Activated CD4-positive, alpha-beta T cell treated with anti-CD3 and anti-CD28 coated beads for 36 hours (primary cell): ENCODE measurements at regions of chr6 and their contacts with region 1.

Region 1: GRCh38 chr6:117602151-117602898 is at the start of gene GOPC:
- DNase-seq: peak; percentile 96
- ATAC-seq: peak; percentile 94
- H3K4me3 Mint-ChIP-seq: peak within 1 kb of the TSS; percentile 99
- H3K27ac Mint-ChIP-seq: peak within 1 kb of the TSS; percentile 99
- H3K4me1 Mint-ChIP-seq: peaks cover 30% of the 10 kb centered on the region
- H3K27me3 Mint-ChIP-seq: peaks cover 2% of the 10 kb centered on the region
- total RNA-seq, gene GOPC: 13.3 to 15.5 TPM

Region 2: DNA sequence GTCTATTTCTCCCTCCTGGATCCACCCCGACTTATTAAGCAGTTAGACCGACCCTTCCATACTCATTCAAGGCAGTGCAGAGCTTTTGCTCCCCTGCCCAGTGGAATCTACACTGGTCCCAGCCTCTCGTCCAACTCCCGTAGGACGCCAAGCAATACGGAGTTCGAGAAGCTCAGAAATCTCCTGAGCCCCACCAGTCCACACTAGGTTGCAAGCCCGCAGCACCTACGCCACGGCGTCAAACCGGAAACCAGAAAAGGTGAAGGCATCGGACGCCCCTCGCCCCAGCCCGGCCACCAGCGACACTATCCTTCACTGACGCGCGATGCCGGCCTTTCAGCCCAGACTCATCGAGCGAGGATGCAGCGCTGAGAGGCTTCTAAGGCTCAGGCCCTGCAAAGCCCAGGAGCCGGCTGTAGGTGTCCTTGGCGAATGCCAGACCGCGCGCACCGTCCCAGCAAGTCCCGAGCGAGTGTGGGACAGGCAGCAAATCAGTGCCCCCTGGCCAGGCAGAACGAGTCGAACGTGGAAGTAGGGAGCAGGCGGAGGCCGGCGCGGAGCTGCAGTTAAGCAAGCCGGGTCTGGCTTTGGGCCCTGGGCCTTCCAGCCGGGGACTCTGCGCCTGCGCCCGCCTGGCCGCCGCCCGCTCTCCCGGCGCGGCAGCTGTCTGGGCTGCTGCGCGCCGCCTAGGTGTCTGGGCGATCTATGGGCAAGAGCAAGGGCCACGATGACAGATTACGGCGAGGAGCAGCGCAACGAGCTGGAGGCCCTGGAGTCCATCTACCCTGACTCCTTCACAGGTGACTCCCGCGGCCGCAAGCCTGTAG is 1031.3 kb before region 1 on chr6 and contains the start of gene RWDD1:
- CTCF ChIA-PET with region 1: no interaction called
- POLR2A ChIA-PET with region 1: no interaction called
- intact Hi-C with region 1: loop called in 1 of 2 experiments (anchors 1 kb)
- DNase-seq: peak; percentile 99
- ATAC-seq: peak; percentile 89
- H3K4me3 Mint-ChIP-seq: peak within 1 kb of the TSS; percentile 94
- H3K27ac Mint-ChIP-seq: peak within 1 kb of the TSS; percentile 98
- H3K4me1 Mint-ChIP-seq: peaks cover 39% of the 10 kb centered on the region
- H3K27me3 Mint-ChIP-seq: no peaks in the 10 kb centered on the region
- total RNA-seq, gene RWDD1: 40.0 to 65.4 TPM

Region 3: DNA sequence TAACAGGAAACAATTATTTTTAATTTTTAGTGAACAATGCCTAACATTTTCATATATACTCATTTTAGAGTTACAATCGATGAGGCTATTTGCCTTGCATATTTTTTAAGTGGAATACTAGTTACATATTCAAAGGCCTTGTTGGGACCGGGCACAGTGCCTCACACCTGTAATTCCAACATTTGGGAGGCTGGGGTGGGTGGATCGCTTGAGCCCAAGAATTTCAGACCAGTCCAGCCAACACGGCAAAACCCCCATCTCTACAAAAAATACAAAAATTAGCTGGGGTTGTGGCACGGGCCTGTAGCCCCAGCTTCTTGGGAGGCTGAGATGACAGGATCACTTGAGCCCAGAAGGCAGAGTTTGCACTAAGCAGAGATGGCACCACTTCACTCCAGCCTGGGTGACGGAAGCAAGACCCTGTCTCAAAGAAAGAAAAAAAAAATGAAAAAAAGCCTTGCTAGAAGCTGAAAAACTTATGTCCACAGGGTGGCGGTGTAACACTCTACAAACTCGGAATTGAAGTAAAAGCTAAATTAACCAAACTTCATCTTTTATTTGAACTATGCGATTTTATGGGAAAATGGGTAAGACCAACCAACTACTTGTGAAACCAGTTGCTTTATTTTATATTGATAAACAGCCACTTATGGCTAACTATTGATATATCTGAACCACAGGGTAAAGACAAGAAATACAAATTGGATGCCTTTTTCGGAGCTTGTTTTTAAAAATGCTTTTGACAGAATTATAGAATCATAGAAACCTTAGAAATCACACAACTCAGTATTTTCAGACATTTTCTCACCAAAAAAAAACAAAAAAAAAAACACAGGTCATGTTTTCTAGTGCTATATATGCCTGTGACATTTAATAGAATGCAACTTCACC is 152.5 kb before region 1 on chr6:
- CTCF ChIA-PET with region 1: interaction called, 58 read pairs
- POLR2A ChIA-PET with region 1: interaction called, 3 read pairs
- intact Hi-C with region 1: loop called (anchors 1 kb)
- DNase-seq: peak; percentile 72
- ATAC-seq: no peak
- H3K4me3 Mint-ChIP-seq: no peak overlapping the region
- H3K27ac Mint-ChIP-seq: no peak overlapping the region
- H3K4me1 Mint-ChIP-seq: no peaks in the 10 kb centered on the region
- H3K27me3 Mint-ChIP-seq: peaks cover 12% of the 10 kb centered on the region

Region 4: DNA sequence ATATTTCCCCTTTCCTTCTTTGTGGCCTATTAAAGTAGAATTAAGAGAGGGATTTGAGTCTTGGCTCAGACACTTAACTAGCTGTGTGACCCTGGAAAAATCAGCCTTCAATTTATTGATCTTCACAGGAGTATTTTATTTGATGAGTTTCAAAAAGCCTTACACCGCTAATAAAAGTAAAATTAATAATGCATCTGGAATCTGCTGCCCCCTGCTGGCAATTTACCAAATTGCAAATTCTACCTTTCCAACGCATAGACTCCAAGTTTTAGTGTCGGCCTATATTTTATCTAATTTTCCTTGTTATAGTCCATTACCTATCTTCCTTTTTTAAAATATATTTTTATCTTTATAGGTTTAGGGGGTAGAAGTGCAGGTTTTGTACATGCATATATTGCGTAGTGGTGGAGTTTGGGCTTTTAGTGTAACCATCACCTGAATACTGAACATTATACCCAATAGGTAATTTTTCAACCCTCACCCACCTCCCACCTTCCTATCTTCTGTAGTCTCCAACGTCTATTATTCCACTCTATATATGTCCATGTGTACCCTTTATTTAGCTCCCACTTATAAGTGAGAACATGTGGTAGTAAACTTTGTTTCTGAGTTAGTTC is 46.3 kb before region 1 on chr6:
- CTCF ChIA-PET with region 1: interaction called, 6 read pairs
- POLR2A ChIA-PET with region 1: no interaction called
- intact Hi-C with region 1: loop called in 1 of 2 experiments (anchors 2 kb)
- DNase-seq: peak; percentile 69
- ATAC-seq: no peak
- H3K4me3 Mint-ChIP-seq: no peak overlapping the region
- H3K27ac Mint-ChIP-seq: no peak overlapping the region
- H3K4me1 Mint-ChIP-seq: peaks cover under 1% of the 10 kb centered on the region
- H3K27me3 Mint-ChIP-seq: no peaks in the 10 kb centered on the region

Region 5: DNA sequence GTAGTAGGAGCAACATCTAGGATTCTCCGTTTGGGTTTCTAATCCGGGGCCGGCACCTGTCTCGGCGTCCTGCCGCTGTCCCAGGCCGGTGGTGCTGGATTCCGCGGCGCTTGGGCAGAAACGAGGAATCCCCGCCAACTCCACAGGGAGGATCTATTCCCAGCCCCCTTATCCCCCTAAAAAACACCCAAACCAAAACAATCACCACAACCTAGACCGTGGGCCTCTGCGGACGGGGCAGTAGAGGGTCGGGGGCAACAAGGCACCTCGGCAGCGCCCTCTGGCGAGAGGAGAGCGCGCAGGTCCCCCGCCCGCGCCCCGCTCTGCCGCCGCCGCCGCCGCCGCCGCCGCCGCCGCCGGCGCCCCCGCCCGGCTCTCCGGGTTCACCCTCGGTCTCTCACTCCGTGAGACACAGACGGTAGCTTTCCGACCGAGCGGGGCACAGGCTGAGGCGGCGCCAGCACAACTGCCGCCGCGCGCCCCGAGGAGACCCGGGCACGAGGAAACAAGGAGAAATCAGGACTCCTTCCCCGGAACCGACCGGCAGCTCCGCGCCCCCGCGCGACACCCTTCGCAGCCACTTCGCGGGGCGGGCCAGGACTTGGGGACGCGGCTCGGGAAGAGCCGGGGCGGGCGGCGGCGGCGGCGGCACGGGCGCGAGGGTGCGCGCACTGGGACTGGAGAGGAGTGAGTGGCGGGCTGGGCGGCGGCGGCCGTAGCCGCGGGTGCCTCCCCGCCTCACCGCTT is 304.7 kb after region 1 on chr6 and contains the start of gene SLC35F1:
- CTCF ChIA-PET with region 1: no interaction called
- POLR2A ChIA-PET with region 1: no interaction called
- intact Hi-C with region 1: loop called in 1 of 2 experiments (anchors 10 kb)
- DNase-seq: peak; percentile 70
- ATAC-seq: peak; percentile 81
- H3K4me3 Mint-ChIP-seq: peak within 1 kb of the TSS; percentile 59
- H3K27ac Mint-ChIP-seq: no peak within 1 kb of the TSS
- H3K4me1 Mint-ChIP-seq: peaks cover 11% of the 10 kb centered on the region
- H3K27me3 Mint-ChIP-seq: peaks cover 61% of the 10 kb centered on the region
- total RNA-seq, gene SLC35F1: 0.18 to 0.23 TPM